GM23248 (cell line): ENCODE measurements at regions of chr17 and their contacts with region 1.

Region 1: GRCh38 chr17:56558088-56558487 is 35.4 kb upstream of the NOG start:
- DNase-seq: peak; percentile 7
- H3K4me3 ChIP-seq: no peak overlapping the region
- H3K27ac ChIP-seq: no peak overlapping the region
- H3K4me1 ChIP-seq: no peaks in the 10 kb centered on the region
- H3K27me3 ChIP-seq: peaks cover 8% of the 10 kb centered on the region; the same call in 1 of the 2 replicates

Region 2: DNA sequence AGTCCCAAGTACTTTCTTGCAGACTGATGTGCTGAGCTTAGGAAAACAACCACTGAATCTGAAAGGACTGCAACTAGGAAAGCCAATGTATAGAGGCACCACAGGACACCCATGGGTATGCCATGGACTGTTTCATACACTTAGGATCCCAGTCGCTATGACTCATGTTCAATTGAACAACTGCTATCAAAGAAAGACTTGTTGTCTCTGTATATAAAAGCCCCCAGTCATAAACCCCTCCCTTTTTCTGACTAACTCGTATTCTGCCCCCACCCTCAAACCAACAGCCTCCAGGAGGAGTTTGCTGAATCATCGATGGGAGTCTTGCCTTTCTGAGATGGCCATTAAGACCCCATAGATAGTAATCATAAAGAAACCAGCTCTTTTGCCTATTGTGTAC is 199.4 kb before region 1 on chr17:
- in situ Hi-C with region 1: no loop called
- DNase-seq: no peak
- H3K4me3 ChIP-seq: no peak overlapping the region
- H3K27ac ChIP-seq: no peak overlapping the region
- H3K4me1 ChIP-seq: no peaks in the 10 kb centered on the region
- H3K27me3 ChIP-seq: no peaks in the 10 kb centered on the region

Region 3: GRCh38 chr17:56510554-56511342 is 47.3 kb before region 1 on chr17:
- in situ Hi-C with region 1: loop called (anchors 5 kb)
- DNase-seq: no peak
- H3K4me3 ChIP-seq: no peak overlapping the region
- H3K27ac ChIP-seq: no peak overlapping the region
- H3K4me1 ChIP-seq: no peaks in the 10 kb centered on the region
- H3K27me3 ChIP-seq: no peaks in the 10 kb centered on the region; the same call in 1 of the 2 replicates